HEK293T (cell line): ENCODE measurements at regions of chr1 and their contacts with region 1.

Region 1: GRCh38 chr1:45339789-45340570 is at the starts of genes MUTYH and TOE1:
- DNase-seq: peak; percentile 94

Region 2: DNA sequence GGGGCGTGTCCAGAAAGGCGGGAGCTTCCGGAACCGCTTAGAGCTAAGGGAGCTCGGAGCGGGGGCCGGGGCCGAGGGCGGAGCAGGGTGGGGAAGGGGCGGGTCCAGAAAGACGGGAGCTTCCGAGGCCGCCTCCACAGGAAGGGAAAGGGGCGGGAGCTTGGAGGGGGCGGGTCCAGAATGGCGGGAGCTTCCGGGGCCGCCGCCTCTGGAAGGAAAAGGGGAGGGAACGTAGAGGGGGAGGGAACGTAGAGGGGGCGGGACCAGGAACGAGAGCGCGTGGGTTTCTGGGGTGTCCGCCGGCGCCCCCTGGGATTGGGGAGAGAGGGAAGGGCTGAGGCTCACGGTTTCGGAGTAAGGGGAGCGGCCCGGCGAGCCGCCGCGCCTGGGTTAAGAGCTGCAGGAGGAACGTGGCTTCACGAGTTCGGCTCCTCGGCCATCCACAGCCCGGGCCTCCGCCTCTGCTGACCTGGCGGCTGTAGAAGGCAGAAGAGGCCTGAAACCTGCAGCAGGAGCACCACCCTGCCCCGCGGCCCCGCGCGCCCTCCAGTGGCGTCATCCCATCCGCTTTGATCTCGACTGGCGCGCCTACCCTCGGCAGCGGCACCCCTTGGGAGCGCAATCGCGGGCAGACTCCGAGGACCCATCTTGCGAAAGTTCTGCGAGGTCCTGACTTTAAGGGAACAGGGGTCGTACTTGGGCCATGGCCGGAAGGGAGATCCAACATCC is 36.2 kb before region 1 on chr1:
- CTCF ChIA-PET with region 1: interaction called, 3 read pairs
- POLR2A ChIA-PET with region 1: interaction called, 90 read pairs
- DNase-seq: peak; percentile 97

Region 3: DNA sequence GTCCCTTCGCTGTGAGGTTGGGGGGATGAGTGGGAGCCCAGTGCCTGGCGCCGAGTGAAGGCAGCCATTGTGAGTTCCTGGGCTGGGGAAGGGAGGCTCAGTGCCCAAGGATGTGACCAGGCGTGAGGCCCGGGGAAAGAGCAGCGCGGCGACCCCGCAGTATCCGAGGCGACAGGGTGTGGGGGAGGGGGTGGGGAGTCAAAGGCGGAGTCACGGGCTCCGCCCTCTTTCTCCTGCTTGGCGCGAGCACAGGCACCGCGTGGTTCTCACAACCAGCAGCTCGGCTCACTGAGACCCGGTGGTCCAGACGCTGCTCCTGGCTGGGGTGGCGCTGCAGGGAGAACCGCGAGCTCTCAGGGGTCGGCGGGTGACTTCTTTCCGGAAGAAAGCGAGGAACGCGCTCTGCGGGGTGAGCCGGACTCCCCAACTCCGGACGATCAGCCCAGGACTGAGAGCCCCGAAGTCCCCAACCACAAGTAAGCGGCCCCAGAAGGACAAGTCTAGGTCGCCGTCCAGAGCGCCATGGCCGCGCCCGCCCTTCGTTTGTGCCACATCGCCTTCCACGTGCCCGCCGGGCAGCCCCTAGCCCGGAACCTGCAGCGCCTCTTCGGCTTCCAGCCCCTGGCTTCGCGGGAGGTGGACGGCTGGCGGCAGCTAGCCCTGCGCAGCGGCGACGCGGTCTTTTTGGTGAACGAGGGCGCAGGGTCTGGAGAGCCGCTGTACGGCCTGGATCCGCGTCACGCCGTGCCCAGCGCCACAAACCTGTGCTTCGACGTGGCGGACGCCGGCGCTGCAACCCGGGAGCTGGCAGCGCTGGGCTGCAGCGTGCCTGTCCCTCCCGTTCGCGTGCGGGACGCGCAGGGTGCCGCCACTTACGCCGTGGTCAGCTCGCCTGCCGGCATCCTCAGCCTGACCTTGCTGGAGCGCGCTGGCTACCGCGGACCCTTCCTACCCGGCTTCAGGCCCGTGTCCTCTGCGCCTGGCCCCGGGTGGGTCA is 13.1 kb before region 1 on chr1 and contains the start of gene HPDL:
- CTCF ChIA-PET with region 1: no interaction called
- POLR2A ChIA-PET with region 1: interaction called, 61 read pairs
- DNase-seq: no peak

Region 4: DNA sequence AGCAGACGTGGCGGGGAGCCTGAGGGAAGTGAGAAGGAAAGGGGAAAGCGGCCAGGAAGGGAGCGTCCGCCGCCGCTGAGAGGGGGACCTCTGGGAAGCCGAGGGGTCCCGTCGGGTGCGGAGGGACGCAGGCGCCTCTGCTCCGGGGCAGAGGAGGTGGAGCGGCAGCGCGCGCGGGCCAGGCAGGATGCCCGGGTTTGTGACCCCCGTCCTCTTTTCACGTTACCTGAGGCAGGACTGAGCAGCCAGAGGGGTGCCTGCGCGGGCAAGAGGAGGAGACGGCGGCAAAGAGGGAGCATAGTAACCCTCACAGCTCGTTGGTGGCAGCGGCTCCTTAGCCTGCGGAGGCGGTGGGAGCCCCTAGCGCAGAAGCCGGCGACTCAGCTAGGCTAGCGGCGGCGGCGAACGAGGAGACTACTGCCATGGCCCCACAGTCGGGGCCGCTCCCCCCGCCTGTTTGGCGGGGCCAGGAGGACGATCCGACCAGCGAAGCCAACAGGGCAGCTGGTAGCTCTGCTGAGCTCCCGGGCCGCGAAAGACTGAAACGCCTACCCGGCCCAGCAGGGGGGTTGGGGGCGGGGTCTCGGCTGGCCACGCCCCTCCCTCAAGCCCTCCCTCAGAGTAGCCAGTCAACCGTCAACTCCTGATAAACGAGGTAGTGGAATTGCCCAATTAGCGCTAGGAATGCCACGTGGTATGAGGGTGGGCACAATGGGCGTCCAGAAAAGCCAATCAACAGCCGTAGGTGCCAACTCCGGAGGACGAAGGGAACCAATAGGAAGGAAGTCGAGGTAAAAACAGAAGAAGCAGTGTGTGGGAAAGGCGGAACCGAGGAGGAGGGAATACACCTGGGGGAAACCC is 150.9 kb after region 1 on chr1 and contains the start of gene TESK2:
- CTCF ChIA-PET with region 1: interaction called, 6 read pairs
- POLR2A ChIA-PET with region 1: interaction called, 28 read pairs
- DNase-seq: peak; percentile 94

Region 5: GRCh38 chr1:45569962-45570581 is 230.1 kb after region 1 on chr1:
- CTCF ChIA-PET with region 1: no interaction called
- POLR2A ChIA-PET with region 1: interaction called, 12 read pairs
- DNase-seq: peak; percentile 78